ENCODE measurements at regions of chr5 and their contacts with region 1.

Region 1: DNA sequence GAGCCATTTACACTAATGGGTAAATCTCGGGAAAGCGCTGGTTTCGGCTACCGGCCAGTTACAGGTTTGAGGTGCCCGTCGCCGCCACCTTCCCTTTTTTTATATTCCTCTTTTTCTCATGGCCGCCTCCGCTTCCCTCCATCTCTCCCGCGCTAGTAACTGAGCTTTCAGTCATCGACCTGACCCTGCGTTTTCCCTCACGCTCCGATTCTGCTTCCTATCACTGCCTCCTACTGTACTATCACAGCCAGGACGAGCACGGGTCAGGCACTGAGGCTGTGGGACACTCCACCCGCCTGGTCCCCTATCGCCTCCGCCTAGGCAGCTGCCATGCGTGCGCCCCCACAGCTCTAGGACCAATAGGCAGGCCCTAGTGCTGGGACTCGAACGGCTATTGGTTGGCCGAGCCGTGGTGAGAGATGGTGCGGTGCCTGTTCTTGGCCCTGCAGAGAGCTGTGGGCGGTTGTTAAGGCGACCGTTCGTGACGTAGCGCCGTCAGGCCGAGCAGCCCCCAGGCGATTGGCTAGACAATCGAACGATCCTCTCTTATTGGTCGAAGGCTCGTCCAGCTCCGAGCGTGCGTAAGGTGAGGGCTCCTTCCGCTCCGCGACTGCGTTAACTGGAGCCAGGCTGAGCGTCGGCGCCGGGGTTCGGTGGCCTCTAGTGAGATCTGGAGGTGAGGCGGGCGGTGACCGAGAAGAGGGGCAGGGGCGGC is at the start of gene HMGCR:
- DNase-seq: peak; percentile 97 to 99
- ATAC-seq: peak; percentile 99 to 100 (median 99)
- H3K4me3 ChIP-seq: peak within 1 kb of the TSS; percentile 72 to 99 (median 90)
- H3K27ac ChIP-seq: peak within 1 kb of the TSS; percentile 37 to 95 (median 90)
- H3K4me1 ChIP-seq: peaks cover 2 to 28% (median 18%) of the 10 kb centered on the region in 9 donors
- H3K27me3 ChIP-seq: no peaks in the 10 kb centered on the region
- CTCF ChIP-seq: peak in 5 of 9 donors; percentile 5 to 53 (median 41)
- total RNA-seq, gene HMGCR: 9.8 to 16.3 (median 11.4) TPM

Region 2: DNA sequence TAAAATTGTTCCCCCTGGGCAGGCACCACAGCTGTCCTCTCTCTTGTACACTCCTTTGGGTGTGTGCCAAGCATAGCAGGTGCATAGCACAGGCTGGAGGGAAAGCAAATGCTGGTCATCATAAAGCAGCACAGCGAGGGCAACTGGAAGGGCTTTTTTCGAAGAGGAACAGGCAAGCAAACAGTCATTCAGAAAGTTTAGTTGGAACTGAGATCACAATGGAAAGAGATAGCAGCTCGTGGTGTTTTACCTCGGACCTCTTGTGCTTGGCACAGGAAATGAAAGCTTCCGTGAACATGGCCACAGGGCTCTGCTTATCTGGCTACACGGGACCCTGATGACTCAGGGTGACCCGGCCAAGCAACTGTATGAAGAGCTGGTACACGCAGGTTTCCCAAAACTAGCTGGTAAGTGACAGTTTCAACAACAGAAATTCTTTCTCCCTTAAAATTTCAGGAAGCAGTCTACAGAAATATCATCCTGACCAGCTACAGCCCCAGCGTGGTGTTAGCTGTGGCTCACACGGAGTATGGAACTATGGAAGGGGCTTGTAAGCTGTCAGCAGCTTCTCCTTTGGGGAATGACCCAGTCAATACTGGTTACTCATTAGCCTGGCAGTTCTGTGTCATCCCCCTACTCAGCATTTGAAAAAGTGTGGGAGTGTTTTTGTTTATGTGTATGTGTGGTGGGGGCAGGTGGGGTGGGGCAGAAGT is 332.4 kb after region 1 on chr5:
- intact Hi-C with region 1: loop called in 1 of 10 experiments (anchors 10 kb)
- DNase-seq: peak in 1 of 2 donors; percentile 29
- ATAC-seq: peak; percentile 64 to 90 (median 73)
- H3K4me3 ChIP-seq: peak overlapping the region in 6 of 10 donors; percentile 18 to 39 (median 26)
- H3K27ac ChIP-seq: peak overlapping the region in 3 of 10 donors; percentile 1 to 45 (median 21)
- H3K4me1 ChIP-seq: peaks cover 0 to 21% (median 12%) of the 10 kb centered on the region in 9 donors
- H3K27me3 ChIP-seq: no peaks in the 10 kb centered on the region
- CTCF ChIP-seq: no peak

Region 3: GRCh38 chr5:75681125-75681830 is 344.5 kb after region 1 on chr5:
- intact Hi-C with region 1: loop called in 2 of 10 experiments (anchors 5 to 10 kb)
- DNase-seq: no peak
- ATAC-seq: peak in 2 of 8 donors; percentile 16 to 37
- H3K4me3 ChIP-seq: no peak overlapping the region
- H3K27ac ChIP-seq: peak overlapping the region in 1 of 10 donors; percentile 1
- H3K4me1 ChIP-seq: peaks cover 0 to 12% (median 0%) of the 10 kb centered on the region in 9 donors
- H3K27me3 ChIP-seq: no peaks in the 10 kb centered on the region
- CTCF ChIP-seq: peak; percentile 60 to 89 (median 78)

Region 4: DNA sequence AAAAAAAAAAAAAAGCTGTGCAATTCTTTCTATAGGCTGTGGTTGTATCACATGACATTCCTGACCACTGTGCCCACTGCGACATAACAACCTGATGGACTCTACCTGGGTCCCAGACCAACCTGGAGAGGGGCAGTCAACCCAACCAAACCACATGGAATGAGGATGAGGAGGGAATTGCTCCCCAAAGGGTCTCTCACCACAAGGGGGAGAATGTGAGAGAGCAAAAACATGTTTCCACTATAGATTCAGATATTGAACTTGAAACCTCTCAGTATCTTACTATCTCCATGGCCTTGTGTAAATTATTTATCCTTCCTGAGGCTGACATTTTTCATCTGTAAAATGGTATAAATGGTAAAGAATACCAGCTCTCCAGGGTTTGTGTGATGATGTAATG is 679.5 kb after region 1 on chr5:
- intact Hi-C with region 1: no loop called
- DNase-seq: no peak
- ATAC-seq: no peak
- H3K4me3 ChIP-seq: no peak overlapping the region
- H3K27ac ChIP-seq: no peak overlapping the region
- H3K4me1 ChIP-seq: no peaks in the 10 kb centered on the region
- H3K27me3 ChIP-seq: peaks cover 0 to 5% (median 0%) of the 10 kb centered on the region in 7 donors
- CTCF ChIP-seq: no peak

Measured in heart right ventricle (tissue), 16 donors.